Common myeloid progenitor, CD34-positive (primary cell): ENCODE measurements at regions of chr15 and their contacts with region 1.

Region 1: GRCh38 chr15:41660235-41661077 is at the start of gene MGA:
- DNase-seq: peak; percentile 92 to 96 (median 94)
- H3K4me3 ChIP-seq: peak within 1 kb of the TSS in 6 of 7 experiments; percentile 46 to 72 (median 63)
- H3K27ac ChIP-seq: peak within 1 kb of the TSS in 1 of 2 experiments; percentile 81
- H3K4me1 ChIP-seq: peaks cover 5 to 47% (median 27%) of the 10 kb centered on the region in 4 experiments
- H3K27me3 ChIP-seq: no peaks in the 10 kb centered on the region

Region 2: DNA sequence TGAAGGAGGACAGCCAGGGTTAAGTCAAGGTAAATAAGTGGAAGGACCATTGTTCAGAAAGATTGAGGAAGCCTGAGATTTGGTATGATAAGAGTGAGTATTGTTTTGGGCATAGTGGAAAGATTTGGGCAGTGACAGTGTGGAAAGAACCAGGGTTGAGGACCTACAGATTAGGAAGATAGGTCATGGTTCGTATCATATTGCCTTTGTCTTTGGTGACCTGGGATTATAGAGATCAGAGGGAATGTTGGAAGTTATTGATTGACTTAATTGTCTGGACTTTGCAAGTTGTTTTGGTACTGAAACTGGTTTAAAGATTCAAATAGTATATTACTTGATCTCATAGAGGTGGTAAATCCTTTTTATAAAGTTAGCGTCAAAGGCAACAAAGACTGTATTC is 23.4 kb before region 1 on chr15:
- CTCF ChIA-PET with region 1: no interaction called
- POLR2A ChIA-PET with region 1: no interaction called
- DNase-seq: no peak
- H3K4me3 ChIP-seq: no peak overlapping the region
- H3K27ac ChIP-seq: no peak overlapping the region
- H3K4me1 ChIP-seq: peaks cover 0 to 12% (median 8%) of the 10 kb centered on the region in 4 experiments
- H3K27me3 ChIP-seq: no peaks in the 10 kb centered on the region

Region 3: DNA sequence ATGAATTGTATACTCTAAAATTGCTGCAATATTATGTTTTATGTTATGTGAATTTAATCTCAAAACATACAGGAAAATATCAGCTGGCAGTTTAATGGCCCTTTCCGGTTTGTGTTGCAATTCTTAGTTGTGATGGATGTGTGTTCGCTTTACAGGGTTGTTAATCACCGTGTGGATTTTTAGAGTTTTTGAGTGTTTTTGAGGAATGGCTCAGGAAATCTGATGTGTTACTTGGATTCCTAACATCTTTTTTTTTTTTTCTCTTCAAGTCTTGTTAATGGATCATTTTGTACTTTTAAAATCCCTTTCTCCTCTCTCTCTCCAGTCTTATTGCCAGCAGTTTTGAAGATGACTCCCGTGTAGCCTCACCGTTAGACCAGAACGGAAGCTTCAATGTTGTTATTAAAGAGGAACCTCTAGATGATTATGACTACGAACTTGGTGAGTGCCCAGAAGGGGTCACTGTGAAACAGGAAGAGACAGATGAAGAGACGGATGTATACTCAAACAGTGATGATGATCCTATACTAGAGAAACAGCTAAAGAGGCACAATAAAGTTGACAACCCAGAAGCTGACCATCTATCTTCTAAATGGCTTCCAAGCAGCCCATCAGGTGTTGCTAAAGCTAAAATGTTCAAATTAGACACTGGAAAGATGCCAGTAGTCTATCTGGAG is 35.4 kb after region 1 on chr15:
- CTCF ChIA-PET with region 1: interaction called, 13 read pairs
- POLR2A ChIA-PET with region 1: interaction called, 3 read pairs
- DNase-seq: peak; percentile 82 to 93 (median 92)
- H3K4me3 ChIP-seq: peak overlapping the region in 5 of 7 experiments; percentile 17 to 66 (median 37)
- H3K27ac ChIP-seq: peak overlapping the region; percentile 34 to 74
- H3K4me1 ChIP-seq: peaks cover 11 to 45% (median 34%) of the 10 kb centered on the region in 4 experiments
- H3K27me3 ChIP-seq: no peaks in the 10 kb centered on the region